Transverse colon (tissue), 4 donors: ENCODE measurements at regions of chr3 and their contacts with region 1.

Region 1: GRCh38 chr3:108099679-108100428 is 9.0 kb upstream of the CD47 start:
- DNase-seq: no peak
- H3K4me3 ChIP-seq: no peak overlapping the region
- H3K27ac ChIP-seq: no peak overlapping the region
- H3K4me1 ChIP-seq: peaks cover 0 to 12% (median 0%) of the 10 kb centered on the region in 4 donors
- H3K27me3 ChIP-seq: no peaks in the 10 kb centered on the region
- CTCF ChIP-seq: no peak
- EP300 ChIP-seq: no peak
- POLR2A ChIP-seq: no peak

Region 2: DNA sequence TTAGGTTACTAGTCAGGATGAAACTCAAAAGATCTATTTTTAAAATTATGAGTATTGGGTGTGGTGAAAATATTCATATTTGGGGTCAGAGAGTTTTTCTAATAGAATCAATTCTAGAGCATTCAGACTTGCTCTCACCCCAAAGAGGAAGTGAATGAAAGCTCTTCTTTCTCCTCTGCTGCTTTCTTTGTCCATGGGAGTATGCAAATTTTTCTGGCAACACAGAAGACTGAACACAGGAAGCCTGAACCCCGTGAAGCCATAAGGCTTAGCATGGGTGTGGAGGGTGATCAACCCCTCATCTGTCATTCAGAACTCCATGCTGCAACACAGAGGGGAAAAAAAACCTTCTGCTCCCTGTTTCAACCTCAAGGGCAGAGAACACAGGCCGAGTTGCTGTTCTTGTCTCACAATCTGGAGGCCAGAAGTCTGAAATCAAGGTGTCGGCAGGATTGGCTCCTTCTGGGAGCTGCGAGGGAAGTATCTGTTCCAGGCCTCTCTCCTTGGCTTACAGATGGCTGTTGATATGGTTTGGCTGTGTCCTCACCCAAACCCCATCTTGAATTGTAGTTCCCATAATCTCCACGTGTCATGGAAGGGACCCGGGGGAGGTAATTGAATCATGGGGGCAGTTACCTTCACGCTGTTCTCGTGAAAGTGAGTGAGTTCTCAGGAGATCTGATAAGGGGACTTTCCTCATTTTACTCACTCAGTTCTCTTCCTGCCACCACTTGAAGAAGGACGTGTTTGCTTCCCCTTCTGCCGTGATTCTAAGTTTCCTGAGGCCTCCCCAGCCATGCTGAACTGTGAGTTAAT is 24.7 kb after region 1 on chr3:
- in situ Hi-C with region 1: no loop called
- intact Hi-C with region 1: loop called (anchors 1 kb)
- DNase-seq: peak; percentile 38
- H3K4me3 ChIP-seq: no peak overlapping the region
- H3K27ac ChIP-seq: peak overlapping the region; percentile 30 to 55 (median 45)
- H3K4me1 ChIP-seq: peaks cover 0 to 14% (median 0%) of the 10 kb centered on the region in 4 donors
- H3K27me3 ChIP-seq: no peaks in the 10 kb centered on the region
- CTCF ChIP-seq: no peak
- EP300 ChIP-seq: no peak
- POLR2A ChIP-seq: peak; percentile 28